CD14-positive monocyte (primary cell): ENCODE measurements at regions of chr10 and their contacts with region 1.

Region 1: GRCh38 chr10:123043409-123043925 is 34.7 kb downstream of the ACADSB start:
- DNase-seq: peak; percentile 6 to 22 (median 11)
- H3K4me3 ChIP-seq: no peak overlapping the region
- H3K4me3 Mint-ChIP-seq: no peak overlapping the region
- H3K27ac ChIP-seq: no peak overlapping the region
- H3K27ac Mint-ChIP-seq: peak overlapping the region in 2 of 7 donors; percentile 19 to 82
- H3K4me1 ChIP-seq: peaks cover 11% of the 10 kb centered on the region in 2 donors
- H3K4me1 Mint-ChIP-seq: peaks cover 12% of the 10 kb centered on the region
- H3K27me3 ChIP-seq: no peaks in the 10 kb centered on the region
- H3K27me3 Mint-ChIP-seq: no peaks in the 10 kb centered on the region
- CTCF ChIP-seq: peak; percentile 69

Region 2: DNA sequence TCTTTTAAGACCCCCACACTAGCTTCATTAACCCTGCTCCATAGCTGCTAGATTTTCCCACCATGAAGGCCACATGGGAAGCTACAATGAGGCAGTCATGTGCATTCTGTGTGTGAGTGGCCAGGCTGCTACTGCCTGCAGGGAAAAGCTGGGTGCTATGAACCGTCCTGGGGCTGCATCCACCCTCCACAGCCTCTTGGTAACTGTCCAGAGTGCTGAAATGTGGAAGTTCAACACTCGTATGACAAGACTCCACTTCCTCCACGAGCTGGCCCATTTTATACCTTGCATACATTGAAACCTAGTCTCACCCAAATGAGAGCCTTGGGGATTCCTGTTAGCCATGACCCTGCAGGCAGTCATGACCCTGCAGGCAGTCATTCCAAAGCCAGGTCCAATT is 257.2 kb before region 1 on chr10:
- intact Hi-C with region 1: no loop called
- DNase-seq: no peak
- H3K4me3 ChIP-seq: no peak overlapping the region
- H3K4me3 Mint-ChIP-seq: no peak overlapping the region
- H3K27ac ChIP-seq: no peak overlapping the region
- H3K27ac Mint-ChIP-seq: no peak overlapping the region
- H3K4me1 ChIP-seq: no peaks in the 10 kb centered on the region
- H3K4me1 Mint-ChIP-seq: no peaks in the 10 kb centered on the region
- H3K27me3 ChIP-seq: no peaks in the 10 kb centered on the region
- H3K27me3 Mint-ChIP-seq: peaks cover 0 to 1% (median 0%) of the 10 kb centered on the region in 3 donors
- CTCF ChIP-seq: no peak

Region 3: GRCh38 chr10:123117644-123118417 is 74.4 kb after region 1 on chr10:
- intact Hi-C with region 1: no loop called
- DNase-seq: no peak
- H3K4me3 ChIP-seq: no peak overlapping the region
- H3K4me3 Mint-ChIP-seq: peak overlapping the region in 1 of 2 donors; percentile 65
- H3K27ac ChIP-seq: no peak overlapping the region
- H3K27ac Mint-ChIP-seq: peak overlapping the region in 1 of 7 donors; percentile 33
- H3K4me1 ChIP-seq: no peaks in the 10 kb centered on the region
- H3K4me1 Mint-ChIP-seq: no peaks in the 10 kb centered on the region
- H3K27me3 ChIP-seq: peaks cover 6 to 31% of the 10 kb centered on the region in 2 donors
- H3K27me3 Mint-ChIP-seq: peaks cover 32 to 53% (median 52%) of the 10 kb centered on the region in 3 donors
- CTCF ChIP-seq: no peak

Region 4: DNA sequence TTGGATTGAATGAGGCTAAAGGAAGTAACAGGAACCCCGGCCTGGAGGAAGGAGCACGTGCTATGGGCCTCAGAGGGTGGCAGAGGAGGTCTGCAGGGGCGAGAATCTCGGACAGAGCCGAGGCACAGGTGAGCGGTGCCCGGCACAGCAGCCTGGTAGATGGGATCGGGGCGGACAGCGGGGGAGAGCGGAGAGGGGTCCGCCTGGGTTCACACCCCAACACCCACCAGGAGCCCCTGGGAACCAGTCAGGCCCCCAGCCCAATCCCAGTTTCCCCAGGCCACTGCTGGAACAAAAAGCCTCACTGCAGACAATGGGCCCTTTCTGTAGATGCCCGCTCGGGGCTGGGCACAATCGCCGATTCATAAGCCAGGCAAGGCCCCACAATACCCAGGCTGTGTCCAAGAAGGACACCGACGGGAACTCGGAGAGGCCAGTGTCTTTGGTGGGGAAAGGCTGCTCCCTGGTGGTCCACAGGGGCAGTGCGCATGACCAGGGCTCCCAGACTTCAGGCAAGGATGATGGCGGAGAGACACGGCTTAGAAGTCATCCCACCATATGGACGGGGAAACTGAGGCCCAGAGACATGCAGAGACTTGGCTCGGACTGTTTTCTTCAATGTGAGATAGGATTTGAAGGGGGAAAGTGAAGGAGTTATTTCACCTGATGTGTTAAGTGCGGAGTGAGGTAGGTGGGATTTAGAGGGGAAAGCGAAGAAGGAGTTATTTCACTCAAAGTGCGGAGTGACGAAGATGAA is 515.8 kb after region 1 on chr10:
- intact Hi-C with region 1: loop called (anchors 2 to 5 kb)
- DNase-seq: peak; percentile 45 to 62 (median 50)
- H3K4me3 ChIP-seq: no peak overlapping the region
- H3K4me3 Mint-ChIP-seq: no peak overlapping the region
- H3K27ac ChIP-seq: no peak overlapping the region
- H3K27ac Mint-ChIP-seq: no peak overlapping the region
- H3K4me1 ChIP-seq: no peaks in the 10 kb centered on the region
- H3K4me1 Mint-ChIP-seq: no peaks in the 10 kb centered on the region
- H3K27me3 ChIP-seq: no peaks in the 10 kb centered on the region
- H3K27me3 Mint-ChIP-seq: peaks cover 13 to 17% (median 15%) of the 10 kb centered on the region in 3 donors
- CTCF ChIP-seq: peak; percentile 99